Activated T-helper 1 cell treated with anti-CD3 and anti-CD28 coated beads, Interleukin-12 subunit alpha, Interleukin-12 subunit beta, Interleukin-2, Interleukin-4 antibody, amounts not matched to agents 30 ng/mL and 10 ng/mL and 1 ng/mL, durations not matched to agents 14 hours and 24 hours and 36 hours (primary cell): ENCODE measurements at regions of chr13 and their contacts with region 1.

Region 1: DNA sequence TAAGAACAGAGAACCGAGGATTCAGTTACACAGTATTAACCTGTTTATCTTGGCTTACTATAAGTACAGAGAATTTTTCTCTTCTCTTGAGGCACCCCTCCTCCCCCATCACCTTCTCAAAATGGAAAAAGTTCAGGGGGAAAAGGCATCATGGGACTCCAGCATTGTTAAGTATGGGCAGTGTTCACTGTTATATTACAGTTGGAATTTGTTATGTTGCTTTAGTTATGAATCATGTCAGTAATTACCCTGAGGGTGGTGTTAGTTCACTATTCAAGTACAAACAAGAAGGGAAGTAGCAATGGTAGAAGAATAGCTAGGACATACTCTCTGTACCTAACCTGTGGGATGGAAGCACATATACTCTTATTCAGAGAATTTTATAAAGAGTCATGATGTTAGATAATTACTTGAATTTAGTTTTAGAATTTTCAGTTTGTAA is 12.0 kb downstream of the LPAR6 start:
- DNase-seq: no peak
- H3K4me3 Mint-ChIP-seq: peak overlapping the region; percentile 24
- H3K27ac Mint-ChIP-seq: peak overlapping the region; percentile 37
- H3K4me1 Mint-ChIP-seq: peaks cover 61% of the 10 kb centered on the region
- H3K27me3 Mint-ChIP-seq: no peaks in the 10 kb centered on the region

Region 2: DNA sequence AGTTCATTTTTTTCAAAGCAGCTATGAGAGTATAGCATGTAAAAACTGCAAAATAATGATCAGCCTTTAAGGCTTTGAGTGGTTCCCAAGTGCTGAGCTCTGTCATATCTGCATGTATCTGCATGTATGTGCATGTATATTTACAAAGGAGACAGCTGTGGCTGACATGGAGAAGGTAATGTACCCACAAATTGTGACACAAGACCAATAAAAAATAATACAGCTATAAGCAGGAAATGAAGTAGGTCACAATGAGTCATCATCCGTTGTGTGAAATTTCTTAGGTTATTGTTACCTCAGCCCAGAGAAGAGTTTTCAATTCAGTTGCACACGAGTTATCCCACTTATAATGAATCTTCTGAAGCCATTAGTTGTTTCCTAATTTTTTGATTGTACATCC is 245.0 kb before region 1 on chr13:
- intact Hi-C with region 1: loop called (anchors 5 kb)
- DNase-seq: peak; percentile 9
- H3K4me3 Mint-ChIP-seq: no peak overlapping the region
- H3K27ac Mint-ChIP-seq: peak overlapping the region; percentile 30
- H3K4me1 Mint-ChIP-seq: peaks cover 73% of the 10 kb centered on the region
- H3K27me3 Mint-ChIP-seq: no peaks in the 10 kb centered on the region

Region 3: GRCh38 chr13:48251611-48252081 is 149.2 kb before region 1 on chr13:
- intact Hi-C with region 1: no loop called
- DNase-seq: no peak
- H3K4me3 Mint-ChIP-seq: no peak overlapping the region
- H3K27ac Mint-ChIP-seq: no peak overlapping the region
- H3K4me1 Mint-ChIP-seq: peaks cover 15% of the 10 kb centered on the region
- H3K27me3 Mint-ChIP-seq: no peaks in the 10 kb centered on the region

Region 4: GRCh38 chr13:48303359-48304142 is 97.3 kb before region 1 on chr13 and contains the start of gene RB1:
- intact Hi-C with region 1: loop called (anchors 2 kb)
- DNase-seq: peak; percentile 88
- H3K4me3 Mint-ChIP-seq: peak within 1 kb of the TSS; percentile 99
- H3K27ac Mint-ChIP-seq: peak within 1 kb of the TSS; percentile 97
- H3K4me1 Mint-ChIP-seq: peaks cover 30% of the 10 kb centered on the region
- H3K27me3 Mint-ChIP-seq: no peaks in the 10 kb centered on the region
- total RNA-seq, gene RB1: 26.5 and 28.6 TPM in 2 replicates

Region 5: DNA sequence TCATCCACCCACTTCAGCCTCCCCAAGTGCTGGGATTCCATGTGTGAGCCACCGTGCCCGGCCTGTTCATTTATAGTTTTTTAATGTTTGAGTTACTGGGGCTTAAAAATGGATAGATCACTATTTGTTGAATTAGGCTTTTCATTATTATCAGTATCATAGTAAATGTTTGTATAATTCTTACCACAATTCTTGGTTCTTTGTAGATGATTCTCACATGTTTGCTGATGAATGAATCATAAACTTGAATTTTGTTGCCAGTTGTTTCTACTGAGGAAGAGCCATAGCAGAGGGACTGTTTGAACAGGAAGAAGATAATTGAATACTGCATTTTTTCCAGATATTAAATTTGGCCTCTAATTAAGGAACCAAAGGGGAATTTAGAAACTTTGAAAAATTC is 14.6 kb after region 1 on chr13:
- intact Hi-C with region 1: loop called (anchors 2 kb)
- DNase-seq: no peak
- H3K4me3 Mint-ChIP-seq: no peak overlapping the region
- H3K27ac Mint-ChIP-seq: no peak overlapping the region
- H3K4me1 Mint-ChIP-seq: peaks cover 23% of the 10 kb centered on the region
- H3K27me3 Mint-ChIP-seq: peaks cover 2% of the 10 kb centered on the region

Region 6: GRCh38 chr13:48505597-48506091 is 104.8 kb after region 1 on chr13:
- intact Hi-C with region 1: loop called (anchors 2 kb)
- DNase-seq: peak; percentile 57
- H3K4me3 Mint-ChIP-seq: peak overlapping the region; percentile 38
- H3K27ac Mint-ChIP-seq: peak overlapping the region; percentile 62
- H3K4me1 Mint-ChIP-seq: peaks cover 68% of the 10 kb centered on the region
- H3K27me3 Mint-ChIP-seq: peaks cover 4% of the 10 kb centered on the region

Region 7: DNA sequence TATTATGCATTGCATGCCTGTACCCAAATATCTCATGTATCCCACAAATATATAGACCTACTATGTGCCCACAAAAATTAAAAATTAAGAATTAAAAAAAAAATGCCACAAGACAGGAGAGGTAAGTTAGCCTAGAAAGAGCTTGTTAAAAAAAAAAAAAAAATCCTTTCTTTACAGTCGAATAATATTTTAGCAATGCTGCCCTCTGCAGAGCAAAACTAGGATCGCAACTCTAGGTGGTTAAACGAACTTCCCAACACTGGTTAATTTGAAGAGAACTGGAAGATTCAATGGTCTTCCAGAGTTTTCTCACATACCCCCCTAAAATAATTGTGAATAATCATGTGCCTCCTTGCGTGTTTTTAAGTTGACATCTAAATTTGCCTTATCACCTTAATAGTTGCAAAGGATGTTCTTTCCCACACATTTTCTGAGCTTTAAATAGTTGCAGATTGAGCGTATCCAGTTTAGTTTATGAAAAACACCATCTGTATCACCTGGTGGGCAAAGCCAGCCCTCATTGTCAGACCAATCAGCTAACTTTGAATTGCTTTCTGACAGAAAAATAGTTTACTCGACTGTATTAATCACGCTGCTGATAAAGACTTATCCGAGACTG is 179.4 kb after region 1 on chr13:
- intact Hi-C with region 1: loop called (anchors 5 kb)
- DNase-seq: peak; percentile 44
- H3K4me3 Mint-ChIP-seq: no peak overlapping the region
- H3K27ac Mint-ChIP-seq: no peak overlapping the region
- H3K4me1 Mint-ChIP-seq: peaks cover 16% of the 10 kb centered on the region
- H3K27me3 Mint-ChIP-seq: peaks cover 63% of the 10 kb centered on the region

Region 8: GRCh38 chr13:48975856-48976575 is 575.1 kb after region 1 on chr13 and contains the start of gene FNDC3A:
- intact Hi-C with region 1: loop called (anchors 5 kb)
- DNase-seq: peak; percentile 86
- H3K4me3 Mint-ChIP-seq: peak within 1 kb of the TSS; percentile 94
- H3K27ac Mint-ChIP-seq: peak within 1 kb of the TSS; percentile 100
- H3K4me1 Mint-ChIP-seq: peaks cover 43% of the 10 kb centered on the region
- H3K27me3 Mint-ChIP-seq: peaks cover 2% of the 10 kb centered on the region
- total RNA-seq, gene FNDC3A: 26.9 and 27.0 TPM in 2 replicates